HAP-1 (cell line): ENCODE measurements at regions of chr4 and their contacts with region 1.

Region 1: DNA sequence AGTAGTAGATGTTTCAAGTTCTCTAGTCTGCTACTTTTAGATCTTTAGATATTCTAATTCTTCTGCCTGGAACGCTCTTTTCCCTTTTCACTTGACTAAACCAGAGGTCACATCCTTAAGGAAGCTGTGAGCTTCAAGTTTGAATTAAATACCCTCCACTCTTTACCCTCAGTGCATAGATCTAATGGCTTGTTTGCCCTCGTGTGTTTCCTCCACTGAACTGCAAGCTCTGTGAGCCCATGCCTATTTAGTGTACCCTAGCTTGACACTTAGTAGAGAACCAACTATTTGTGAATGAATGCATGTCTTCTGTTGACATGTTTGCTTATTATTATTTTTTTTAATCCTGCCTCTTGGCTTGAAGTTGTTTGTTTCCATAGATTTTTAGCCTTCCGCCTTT is 138.3 kb downstream of the PDE5A start:
- DNase-seq: peak; percentile 30 to 34
- H3K4me3 ChIP-seq: no peak overlapping the region
- H3K4me1 ChIP-seq: no peaks in the 10 kb centered on the region
- H3K27me3 ChIP-seq: no peaks in the 10 kb centered on the region

Region 2: DNA sequence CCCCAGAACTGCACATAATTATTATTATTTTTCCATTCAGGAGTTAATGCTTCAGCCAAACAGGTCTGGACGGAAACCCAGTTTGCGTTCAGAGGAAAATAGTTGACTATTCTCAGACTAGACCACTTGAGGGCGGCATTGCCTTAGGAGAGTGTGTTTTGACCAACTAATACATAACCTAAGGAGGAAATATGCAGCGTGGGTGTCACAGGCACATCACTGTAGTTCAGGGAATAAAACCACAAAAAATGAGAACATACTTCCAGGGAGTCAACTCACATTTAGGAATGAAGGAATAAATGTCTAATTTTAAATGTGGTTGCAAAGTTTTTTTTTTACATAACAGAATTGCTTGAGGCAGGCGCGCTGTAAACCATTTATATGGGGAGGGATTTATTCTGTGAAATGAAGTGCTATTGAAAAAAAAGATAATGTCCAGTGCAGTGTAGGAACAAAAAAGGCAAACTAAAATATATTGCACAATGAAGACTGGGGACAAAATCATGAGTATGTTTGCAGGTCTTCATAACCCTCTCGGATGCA is 508.4 kb before region 1 on chr4:
- in situ Hi-C with region 1: loop called (anchors 25 kb)
- DNase-seq: peak; percentile 75 to 78
- H3K4me3 ChIP-seq: no peak overlapping the region
- H3K4me1 ChIP-seq: no peaks in the 10 kb centered on the region
- H3K27me3 ChIP-seq: no peaks in the 10 kb centered on the region

Region 3: DNA sequence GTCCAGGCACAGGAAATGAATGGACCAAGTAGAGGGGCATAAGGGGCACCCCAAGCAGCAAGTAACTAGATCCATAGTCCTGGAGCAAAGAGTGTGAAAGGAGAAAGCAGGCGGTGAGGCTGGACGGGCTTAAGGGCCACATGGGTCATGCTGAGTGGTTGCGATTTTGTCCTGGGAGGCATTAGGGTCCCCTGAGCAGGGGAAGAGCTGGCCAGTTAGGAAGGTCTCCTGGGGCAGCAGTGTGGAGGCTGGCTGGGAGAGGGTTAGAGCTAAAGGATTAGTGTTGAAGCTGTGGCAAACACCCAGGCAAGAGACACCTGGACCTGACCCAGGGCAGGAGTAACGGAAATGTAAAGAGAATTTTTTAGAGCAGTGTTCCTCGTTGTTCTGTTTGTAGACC is 328.2 kb before region 1 on chr4:
- in situ Hi-C with region 1: no loop called
- DNase-seq: no peak
- H3K4me3 ChIP-seq: no peak overlapping the region
- H3K4me1 ChIP-seq: no peaks in the 10 kb centered on the region
- H3K27me3 ChIP-seq: no peaks in the 10 kb centered on the region

Region 4: DNA sequence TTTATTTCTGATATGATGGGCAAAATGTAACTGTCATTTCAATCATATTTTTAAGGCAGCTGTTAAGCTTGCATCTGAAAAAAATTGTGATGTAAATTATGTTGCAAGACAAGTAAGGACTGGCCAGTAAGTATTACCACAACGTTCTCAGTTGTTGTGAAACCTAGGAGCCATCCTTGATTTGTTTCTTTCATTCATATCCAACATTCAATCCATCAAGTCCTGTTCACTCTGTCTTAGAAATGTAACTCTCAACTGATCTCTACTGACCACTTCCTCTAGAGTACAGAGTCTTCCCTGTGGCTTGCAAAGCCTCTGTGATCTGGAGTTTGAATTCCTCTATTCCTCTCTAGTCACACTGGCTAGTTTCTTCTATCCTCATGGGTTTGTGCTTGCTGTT is 737.8 kb after region 1 on chr4:
- in situ Hi-C with region 1: no loop called
- DNase-seq: no peak
- H3K4me3 ChIP-seq: no peak overlapping the region
- H3K4me1 ChIP-seq: no peaks in the 10 kb centered on the region
- H3K27me3 ChIP-seq: no peaks in the 10 kb centered on the region; the same call in 1 of the 2 replicates